GM12878 (cell line): ENCODE measurements at regions of chr6 and their contacts with region 1.

Region 1: DNA sequence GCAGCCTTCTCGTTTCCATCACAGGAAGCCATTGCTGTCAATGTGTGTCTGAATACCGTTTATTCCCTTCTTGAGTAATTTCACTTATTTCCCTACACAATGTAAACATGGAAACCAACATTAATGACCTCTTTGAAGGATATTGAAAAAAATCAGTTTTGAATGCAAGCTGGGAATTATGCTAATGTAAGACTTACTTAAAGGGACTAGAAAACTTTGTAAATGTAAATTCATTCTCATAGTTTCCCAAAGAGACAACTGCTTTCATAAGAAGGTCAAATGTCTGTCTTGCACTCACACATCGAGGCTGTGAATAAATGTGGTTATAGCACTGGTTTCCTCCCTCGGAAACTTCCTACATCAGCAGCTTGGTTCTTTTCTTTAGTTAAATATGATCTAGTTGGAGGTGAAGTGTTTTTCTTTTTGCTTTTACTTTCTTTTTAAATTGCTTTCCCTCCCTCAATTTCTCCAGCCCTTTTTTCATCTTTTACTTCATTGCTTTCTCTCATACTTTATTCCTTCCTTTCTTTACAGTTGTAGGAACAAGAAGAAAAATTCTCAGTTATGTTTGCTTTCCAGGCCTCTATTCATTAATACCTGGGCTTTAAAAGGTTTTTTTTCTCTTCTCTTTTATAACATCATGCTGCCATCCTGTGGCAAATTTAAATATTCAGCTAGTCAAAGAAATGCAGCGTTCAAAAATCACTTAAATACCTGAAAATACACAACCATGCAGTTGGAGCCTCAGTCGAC is 108.3 kb downstream of the TNFAIP3 start:
- DNase-seq: peak; percentile 53
- ATAC-seq: peak; percentile 67
- H3K4me3 ChIP-seq: peak overlapping the region; percentile 1; the same call in 1 of the 2 replicates
- H3K27ac ChIP-seq: peak overlapping the region; percentile 34
- H3K4me1 ChIP-seq: peaks cover 36% of the 10 kb centered on the region
- H3K27me3 ChIP-seq: no peaks in the 10 kb centered on the region
- CTCF ChIP-seq: peak; percentile 23 to 62 (median 44); a peak in 5 of 6 replicates
- EP300 ChIP-seq: no peak
- POLR2A ChIP-seq: no peak
- RAD21 ChIP-seq: peak; percentile 81

Region 2: GRCh38 chr6:137697267-137697938 is 278.0 kb before region 1 on chr6:
- CTCF ChIA-PET with region 1: interaction called, 22 read pairs
- POLR2A ChIA-PET with region 1: no interaction called
- RAD21 ChIA-PET with region 1: interaction called, 3 read pairs
- SMC1A ChIA-PET with region 1: interaction called, 7 read pairs
- in situ Hi-C with region 1: no loop called
- intact Hi-C with region 1: no loop called
- DNase-seq: no peak
- ATAC-seq: peak; percentile 80
- H3K4me3 ChIP-seq: no peak overlapping the region
- H3K27ac ChIP-seq: no peak overlapping the region
- H3K4me1 ChIP-seq: peaks cover 13% of the 10 kb centered on the region
- H3K27me3 ChIP-seq: no peaks in the 10 kb centered on the region
- CTCF ChIP-seq: peak; percentile 14 to 35 (median 27); a peak in 5 of 6 replicates
- EP300 ChIP-seq: no peak
- POLR2A ChIP-seq: no peak
- RAD21 ChIP-seq: peak; percentile 58

Region 3: DNA sequence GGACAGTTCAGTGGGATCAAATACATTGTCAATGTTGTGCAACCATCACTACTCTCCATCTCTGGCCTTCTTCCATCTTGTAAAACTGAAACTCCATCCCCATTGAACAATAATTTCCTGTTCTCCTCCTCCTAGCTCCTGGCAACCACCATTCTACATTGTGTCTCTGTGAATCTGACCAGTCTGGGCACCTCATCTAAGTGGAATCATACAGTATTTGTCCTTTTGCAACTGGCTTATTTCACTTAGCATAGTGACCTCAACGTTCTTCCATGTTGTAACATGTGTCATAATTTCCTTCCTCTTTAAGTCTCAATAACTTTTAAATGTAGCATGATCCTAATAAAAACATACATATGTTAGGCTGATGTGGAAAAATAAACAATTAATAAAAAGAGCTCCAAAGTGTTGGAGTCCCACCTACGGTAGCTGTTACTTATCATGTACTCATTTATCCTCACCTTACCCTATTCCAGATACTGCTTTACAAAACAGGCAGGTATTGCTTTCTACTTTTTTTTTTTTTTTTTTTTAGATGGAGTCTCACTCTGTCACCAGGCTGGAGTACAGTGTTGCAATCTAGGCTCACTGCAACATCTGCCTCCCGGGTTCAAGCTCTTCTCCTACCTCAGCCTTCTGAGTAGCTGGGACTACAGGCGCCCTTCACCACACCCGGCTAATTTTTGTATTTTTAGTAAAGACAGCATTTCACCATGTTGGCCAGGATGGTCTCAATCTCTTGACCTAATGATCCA is 16.4 kb before region 1 on chr6:
- CTCF ChIA-PET with region 1: interaction called, 161 read pairs
- POLR2A ChIA-PET with region 1: interaction called, 5 read pairs
- RAD21 ChIA-PET with region 1: interaction called, 8 read pairs
- SMC1A ChIA-PET with region 1: interaction called, 50 read pairs
- in situ Hi-C with region 1: no loop called
- intact Hi-C with region 1: no loop called
- DNase-seq: no peak
- ATAC-seq: no peak
- H3K4me3 ChIP-seq: no peak overlapping the region
- H3K27ac ChIP-seq: no peak overlapping the region
- H3K4me1 ChIP-seq: no peaks in the 10 kb centered on the region
- H3K27me3 ChIP-seq: no peaks in the 10 kb centered on the region
- CTCF ChIP-seq: no peak
- EP300 ChIP-seq: no peak
- POLR2A ChIP-seq: no peak
- RAD21 ChIP-seq: no peak

Region 4: DNA sequence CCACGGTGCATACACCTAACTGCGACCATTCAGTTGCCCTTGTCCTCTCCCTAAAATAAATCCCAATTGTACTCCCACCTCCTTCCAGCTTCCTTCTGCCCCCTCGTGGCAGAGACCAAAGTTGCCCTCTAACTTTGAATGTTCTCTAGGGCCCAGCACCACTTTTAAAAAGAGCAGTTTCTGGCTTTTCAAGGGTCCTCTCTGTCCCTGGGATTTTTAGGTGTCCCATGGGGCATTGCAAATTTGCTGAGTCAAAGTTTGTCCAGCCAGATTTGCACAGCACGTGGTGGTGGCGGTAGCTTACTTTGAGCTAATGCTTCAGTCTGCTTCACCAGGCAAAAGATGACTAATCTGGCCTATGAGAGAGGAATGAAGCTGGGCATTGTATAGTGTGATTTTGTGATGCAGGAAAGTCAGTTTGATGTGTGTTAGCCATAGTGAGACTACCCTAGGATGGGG is 31.7 kb after region 1 on chr6:
- CTCF ChIA-PET with region 1: interaction called, 160 read pairs
- POLR2A ChIA-PET with region 1: interaction called, 3 read pairs
- RAD21 ChIA-PET with region 1: interaction called, 19 read pairs
- SMC1A ChIA-PET with region 1: interaction called, 29 read pairs
- in situ Hi-C with region 1: no loop called
- intact Hi-C with region 1: no loop called
- DNase-seq: no peak
- ATAC-seq: peak; percentile 63
- H3K4me3 ChIP-seq: no peak overlapping the region
- H3K27ac ChIP-seq: no peak overlapping the region
- H3K4me1 ChIP-seq: no peaks in the 10 kb centered on the region
- H3K27me3 ChIP-seq: no peaks in the 10 kb centered on the region
- CTCF ChIP-seq: peak; percentile 57 to 78 (median 72)
- EP300 ChIP-seq: no peak
- POLR2A ChIP-seq: no peak
- RAD21 ChIP-seq: peak; percentile 53

Region 5: DNA sequence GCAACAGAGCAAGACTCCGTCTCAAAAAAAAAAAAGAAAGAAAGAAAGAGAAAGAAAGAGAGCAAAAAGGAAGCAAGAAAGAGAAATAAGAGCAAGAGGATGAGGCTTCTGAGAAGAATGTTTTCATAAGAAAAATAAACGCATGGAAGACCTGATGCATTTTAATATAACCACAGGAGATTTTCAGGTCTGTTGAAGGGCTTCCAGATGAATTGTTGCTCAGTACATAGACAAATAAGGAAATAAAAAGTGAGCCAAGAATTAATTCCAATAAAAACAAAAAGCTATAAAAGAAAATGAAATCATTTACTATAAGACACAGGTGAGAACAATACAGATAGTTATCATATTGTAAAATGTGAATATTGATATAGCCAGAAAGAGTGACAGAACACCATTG is 88.4 kb after region 1 on chr6:
- CTCF ChIA-PET with region 1: no interaction called
- POLR2A ChIA-PET with region 1: no interaction called
- RAD21 ChIA-PET with region 1: no interaction called
- SMC1A ChIA-PET with region 1: no interaction called
- in situ Hi-C with region 1: no loop called
- intact Hi-C with region 1: no loop called
- DNase-seq: no peak
- ATAC-seq: no peak
- H3K4me3 ChIP-seq: no peak overlapping the region
- H3K27ac ChIP-seq: no peak overlapping the region
- H3K4me1 ChIP-seq: no peaks in the 10 kb centered on the region
- H3K27me3 ChIP-seq: no peaks in the 10 kb centered on the region
- CTCF ChIP-seq: no peak
- EP300 ChIP-seq: no peak
- POLR2A ChIP-seq: no peak
- RAD21 ChIP-seq: no peak